ENCODE measurements at regions of chr11 and their contacts with region 1.

Region 1: DNA sequence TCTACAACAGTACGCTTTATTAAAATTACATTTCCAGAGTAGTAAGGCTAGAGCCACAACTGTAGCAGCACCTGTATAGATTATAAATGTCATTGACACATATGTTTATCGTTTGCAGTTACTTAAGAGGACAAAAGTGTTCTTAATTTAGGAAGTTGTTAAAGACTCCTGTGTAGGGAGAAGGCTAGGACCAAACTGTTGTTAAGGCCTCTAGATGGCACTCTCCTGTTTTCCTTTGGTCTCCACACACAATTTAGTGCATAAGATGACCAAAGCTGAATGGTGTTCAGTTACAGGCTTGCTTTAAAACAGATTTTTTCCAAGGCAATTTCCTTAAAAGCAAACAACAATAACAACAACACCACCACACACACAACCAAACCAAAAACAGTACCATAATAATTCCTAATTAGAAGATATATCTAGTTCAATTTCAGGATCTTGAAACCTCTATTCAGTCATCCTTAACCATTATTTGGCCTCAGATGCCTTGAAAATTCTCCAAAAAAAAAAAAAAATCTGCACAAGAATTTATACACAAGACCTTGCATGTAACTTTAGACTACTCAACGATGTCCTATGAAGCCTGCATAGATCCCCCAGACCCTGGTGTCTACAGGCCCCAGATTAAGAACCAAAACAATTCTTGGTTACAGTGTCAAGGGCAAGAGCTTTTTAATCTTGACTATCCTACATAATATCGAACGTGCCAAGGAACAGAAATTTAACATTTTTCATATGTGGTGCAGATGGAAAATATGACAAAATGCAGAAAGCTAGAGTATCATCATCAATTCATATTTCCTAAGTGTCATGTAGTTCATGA is 42.6 kb upstream of the APOA1 start:
- DNase-seq: no peak
- H3K4me3 ChIP-seq: no peak overlapping the region
- H3K27ac ChIP-seq: no peak overlapping the region
- H3K4me1 ChIP-seq: peaks cover 0 to 8% (median 2%) of the 10 kb centered on the region in 4 donors
- H3K27me3 ChIP-seq: no peaks in the 10 kb centered on the region
- CTCF ChIP-seq: peak; percentile 68 to 70 (median 69)
- EP300 ChIP-seq: no peak
- POLR2A ChIP-seq: no peak

Region 2: DNA sequence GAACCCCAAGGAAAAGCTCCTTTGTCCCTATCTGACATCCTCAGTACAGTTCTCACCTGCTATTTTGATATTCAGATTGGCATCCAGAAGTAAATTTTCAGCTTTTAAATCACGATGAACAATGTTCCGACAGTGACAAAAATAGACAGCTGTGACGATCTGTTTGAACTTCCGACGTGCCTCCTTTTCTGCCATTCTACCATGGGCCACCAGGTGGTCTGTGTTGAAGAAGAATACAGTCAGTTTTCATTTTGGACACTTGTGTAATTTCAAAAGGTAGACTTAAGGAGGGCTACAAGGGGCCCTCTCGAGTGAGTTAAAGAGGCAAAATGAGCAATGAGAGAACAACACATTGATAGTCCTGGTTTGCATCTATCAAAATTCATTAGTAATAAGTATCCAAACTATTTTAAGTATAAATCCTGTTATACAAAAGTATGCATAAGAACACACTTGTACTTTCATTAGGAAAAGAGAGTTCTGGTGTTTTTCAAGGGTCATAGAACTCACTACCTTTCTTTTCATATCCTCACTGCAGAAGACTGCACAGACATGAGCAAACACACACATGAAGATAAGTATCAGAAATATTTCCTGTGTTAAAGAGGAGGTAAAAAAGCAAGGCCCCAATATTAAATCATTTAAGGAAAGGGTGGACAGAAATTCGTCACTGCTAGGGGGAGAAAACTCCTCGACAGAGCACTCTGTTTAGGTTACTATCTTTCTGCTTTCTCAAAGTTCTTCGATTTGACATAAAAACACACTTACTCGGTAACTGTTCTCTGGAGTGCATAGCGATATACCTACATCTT is 47.4 kb after region 1 on chr11:
- intact Hi-C with region 1: loop called (anchors 5 kb)
- DNase-seq: no peak
- H3K4me3 ChIP-seq: no peak overlapping the region
- H3K27ac ChIP-seq: no peak overlapping the region
- H3K4me1 ChIP-seq: peaks cover 41 to 56% (median 43%) of the 10 kb centered on the region in 4 donors
- H3K27me3 ChIP-seq: no peaks in the 10 kb centered on the region
- CTCF ChIP-seq: peak in 2 of 3 experiments; percentile 38 to 47
- EP300 ChIP-seq: no peak
- POLR2A ChIP-seq: no peak

Region 3: GRCh38 chr11:116960930-116961329 is 80.9 kb after region 1 on chr11:
- intact Hi-C with region 1: no loop called
- DNase-seq: no peak
- H3K4me3 ChIP-seq: no peak overlapping the region
- H3K27ac ChIP-seq: peak overlapping the region in 1 of 4 donors; percentile 13
- H3K4me1 ChIP-seq: peaks cover 16 to 46% (median 36%) of the 10 kb centered on the region in 4 donors
- H3K27me3 ChIP-seq: no peaks in the 10 kb centered on the region
- CTCF ChIP-seq: no peak
- EP300 ChIP-seq: no peak
- POLR2A ChIP-seq: no peak

Region 4: DNA sequence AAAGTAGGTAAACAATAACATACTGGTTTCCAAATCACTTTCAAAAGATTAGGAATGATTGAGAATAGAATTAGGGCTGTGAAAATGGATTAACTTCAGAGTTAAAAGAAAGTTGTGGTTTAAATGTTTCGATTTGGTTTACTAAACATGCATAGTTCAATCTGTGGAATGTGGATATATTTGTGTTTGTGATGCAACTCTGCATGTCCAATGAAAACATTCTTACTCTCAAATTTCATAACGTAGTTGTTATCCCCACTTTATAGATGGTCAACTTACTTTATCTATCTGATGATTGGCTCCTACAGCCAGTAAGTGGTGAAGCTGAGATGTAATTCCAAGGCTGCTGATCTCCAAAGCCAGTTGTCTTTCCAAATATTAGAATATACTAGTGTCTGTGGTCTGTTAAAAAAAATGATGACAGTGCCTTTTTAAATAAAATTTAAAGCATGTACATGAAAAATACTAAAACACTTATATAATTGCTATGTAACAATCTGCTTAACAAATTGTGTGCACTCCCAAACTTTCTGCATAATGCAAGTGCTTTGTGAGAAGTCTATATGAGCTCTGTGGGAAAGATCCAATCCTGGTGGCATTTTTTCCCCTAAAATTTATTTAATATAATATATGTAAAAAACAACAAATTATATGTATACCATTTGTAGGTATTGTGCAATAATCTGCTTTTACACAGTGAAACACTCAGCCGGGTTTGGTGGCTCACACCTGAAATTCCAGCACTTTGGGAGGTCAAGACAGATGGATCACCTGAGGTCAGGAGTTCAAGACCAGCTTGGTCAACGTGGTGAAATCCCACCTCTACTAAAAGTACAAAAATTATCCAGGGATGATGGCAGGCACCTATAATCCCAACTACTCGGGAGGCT is 227.9 kb after region 1 on chr11:
- intact Hi-C with region 1: loop called (anchors 2 kb)
- DNase-seq: no peak
- H3K4me3 ChIP-seq: no peak overlapping the region
- H3K27ac ChIP-seq: no peak overlapping the region
- H3K4me1 ChIP-seq: peaks cover 0 to 16% (median 9%) of the 10 kb centered on the region in 4 donors
- H3K27me3 ChIP-seq: no peaks in the 10 kb centered on the region
- CTCF ChIP-seq: no peak
- EP300 ChIP-seq: no peak
- POLR2A ChIP-seq: no peak

Measured in esophagus muscularis mucosa (tissue), 4 donors.